ENCODE measurements at regions of chr1 and their contacts with region 1.

Region 1: GRCh38 chr1:217186664-217187063 is 444.2 kb downstream of the GPATCH2 start:
- DNase-seq: no peak

Region 2: GRCh38 chr1:217244971-217245370 is 58.3 kb after region 1 on chr1:
- intact Hi-C with region 1: loop called in 1 of 2 experiments (anchors 2 kb)
- DNase-seq: no peak

Region 3: GRCh38 chr1:217703326-217703725 is 516.7 kb after region 1 on chr1:
- intact Hi-C with region 1: no loop called
- DNase-seq: no peak